Activated T-helper 2 cell treated with anti-CD3 and anti-CD28 coated beads, Interferon-gamma antibody, Interleukin-2, Interleukin-4, amounts not matched to agents 10 μg/mL and 5 μg/mL and 100 μg/mL, durations not matched to agents 14 hours and 24 hours and 36 hours (primary cell): ENCODE measurements at regions of chr4 and their contacts with region 1.

Region 1: DNA sequence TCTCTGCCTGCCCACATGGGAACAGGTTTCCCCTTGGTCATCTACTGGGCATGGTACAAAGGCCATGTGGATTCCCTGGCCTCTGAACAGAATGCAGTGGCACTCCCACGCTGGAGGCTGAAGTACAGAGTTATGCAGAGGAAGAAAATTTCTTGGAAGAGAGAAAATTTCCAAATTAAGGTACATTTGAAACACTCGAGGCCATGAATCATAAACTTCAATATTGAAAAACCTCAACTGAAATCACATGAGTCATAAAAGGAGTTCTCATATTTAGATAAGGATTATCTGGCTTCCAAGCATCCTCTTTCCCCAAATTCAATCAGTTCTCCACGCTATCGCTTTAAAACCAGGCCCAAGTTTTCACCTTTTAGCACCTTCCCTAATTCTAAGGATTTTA is 28.1 kb upstream of the TXK start:
- DNase-seq: no peak
- H3K4me3 Mint-ChIP-seq: no peak overlapping the region
- H3K27ac Mint-ChIP-seq: no peak overlapping the region
- H3K4me1 Mint-ChIP-seq: peaks cover 14% of the 10 kb centered on the region
- H3K27me3 Mint-ChIP-seq: peaks cover 12% of the 10 kb centered on the region

Region 2: GRCh38 chr4:48008021-48008596 is 154.1 kb before region 1 on chr4:
- intact Hi-C with region 1: no loop called
- DNase-seq: no peak
- H3K4me3 Mint-ChIP-seq: no peak overlapping the region
- H3K27ac Mint-ChIP-seq: no peak overlapping the region
- H3K4me1 Mint-ChIP-seq: no peaks in the 10 kb centered on the region
- H3K27me3 Mint-ChIP-seq: peaks cover 3% of the 10 kb centered on the region

Region 3: DNA sequence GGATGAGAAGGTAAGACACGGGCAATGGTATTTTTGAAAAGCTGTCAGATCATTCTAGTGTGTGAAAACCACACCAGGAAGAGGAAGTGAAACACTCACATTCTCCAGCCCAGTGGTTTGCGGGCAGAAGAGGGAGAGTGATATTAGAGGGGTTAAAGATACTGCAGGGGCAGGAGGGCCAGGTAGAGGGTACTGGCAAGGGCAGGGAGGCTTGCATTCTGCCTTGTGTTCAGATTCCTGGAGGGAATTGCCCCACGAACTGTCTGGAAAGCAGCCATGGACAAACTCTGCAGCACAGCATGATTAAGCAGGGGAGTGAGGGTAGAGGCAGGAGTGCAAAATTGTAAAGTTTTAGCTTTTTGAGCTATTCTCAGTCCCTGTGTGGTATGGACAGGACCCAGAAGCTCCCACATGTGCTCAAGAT is 114.7 kb before region 1 on chr4:
- intact Hi-C with region 1: loop called (anchors 5 kb)
- DNase-seq: peak; percentile 48
- H3K4me3 Mint-ChIP-seq: peak overlapping the region; percentile 34
- H3K27ac Mint-ChIP-seq: peak overlapping the region; percentile 3
- H3K4me1 Mint-ChIP-seq: peaks cover 32% of the 10 kb centered on the region
- H3K27me3 Mint-ChIP-seq: peaks cover 72% of the 10 kb centered on the region